Gastrocnemius medialis (tissue), 4 donors: ENCODE measurements at regions of chr13 and their contacts with region 1.

Region 1: DNA sequence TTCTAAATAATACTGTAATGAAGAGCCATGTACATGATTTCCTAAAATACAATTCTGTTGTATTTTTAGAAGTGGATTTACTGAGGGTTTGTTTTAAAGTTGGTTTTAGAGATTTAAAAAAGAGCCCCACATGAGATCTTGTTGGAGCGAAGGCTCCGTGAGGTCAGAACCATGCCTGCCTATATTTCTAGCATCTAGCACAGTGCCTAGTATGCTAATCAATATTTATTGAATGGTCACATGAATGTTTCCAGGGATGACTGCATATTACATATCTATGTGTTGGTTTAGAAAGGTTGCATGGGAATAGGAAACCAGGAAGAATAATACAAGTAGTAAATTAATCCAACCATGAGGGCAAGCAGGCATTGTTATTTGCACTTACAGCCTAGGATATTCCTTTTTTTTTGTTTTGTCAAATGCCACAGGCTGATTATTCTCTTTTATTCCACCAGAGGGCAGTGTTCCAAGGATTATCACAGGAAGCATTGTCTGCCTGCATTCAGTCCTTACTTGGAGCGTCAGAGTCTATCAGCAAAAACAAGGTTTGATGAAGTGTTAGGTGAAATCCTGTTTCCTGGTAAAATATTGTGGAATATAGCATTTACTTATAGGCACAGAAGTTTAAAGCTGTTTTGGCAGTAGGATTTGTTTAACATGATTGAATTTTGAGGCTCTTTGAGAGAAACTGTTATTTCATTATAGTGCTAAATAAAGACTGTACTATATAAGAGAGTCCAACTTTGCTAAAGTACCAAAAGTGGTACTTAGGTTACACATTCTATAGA is 46.8 kb downstream of the COG3 start:
- DNase-seq: no peak
- ATAC-seq: peak; percentile 70 to 76
- H3K4me3 ChIP-seq: no peak overlapping the region
- H3K27ac ChIP-seq: no peak overlapping the region
- H3K4me1 ChIP-seq: no peaks in the 10 kb centered on the region
- H3K27me3 ChIP-seq: no peaks in the 10 kb centered on the region
- CTCF ChIP-seq: peak; percentile 67 to 85 (median 78)
- POLR2A ChIP-seq: no peak

Region 2: GRCh38 chr13:46041419-46041839 is 529.9 kb after region 1 on chr13:
- in situ Hi-C with region 1: loop called in 1 of 4 experiments (anchors 25 kb)
- intact Hi-C with region 1: no loop called
- DNase-seq: no peak
- ATAC-seq: no peak
- H3K4me3 ChIP-seq: no peak overlapping the region
- H3K27ac ChIP-seq: no peak overlapping the region
- H3K4me1 ChIP-seq: peaks cover 0 to 15% of the 10 kb centered on the region in 2 donors
- H3K27me3 ChIP-seq: no peaks in the 10 kb centered on the region
- CTCF ChIP-seq: no peak
- POLR2A ChIP-seq: no peak

Region 3: DNA sequence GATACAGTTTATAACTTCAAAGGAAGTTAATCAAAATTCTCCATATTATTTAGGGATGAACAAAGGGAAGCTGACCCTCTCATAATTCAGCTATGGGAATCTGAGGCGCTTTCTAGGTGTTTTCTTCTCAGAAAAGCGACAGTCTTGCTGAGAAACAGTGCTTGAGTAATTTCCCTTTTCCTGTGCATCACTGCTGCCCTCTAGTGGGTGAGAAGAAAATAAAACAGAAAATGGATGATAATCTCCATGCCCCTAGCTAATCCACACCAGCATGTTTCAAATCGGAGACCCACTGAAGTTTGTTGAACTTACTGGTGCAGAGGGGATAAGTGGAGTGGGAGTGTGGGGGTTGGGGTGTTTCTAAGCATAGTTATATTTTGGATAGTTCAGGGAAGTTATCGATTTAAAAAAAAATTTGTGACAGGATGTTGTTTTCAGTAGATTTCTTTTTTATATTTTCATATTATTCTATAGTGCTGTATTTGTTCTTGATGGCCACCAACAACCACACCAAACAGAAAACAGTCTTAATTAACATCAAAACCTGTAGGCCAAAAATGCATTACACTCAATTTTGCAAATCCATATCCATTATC is 649.1 kb after region 1 on chr13:
- in situ Hi-C with region 1: loop called in 1 of 4 experiments (anchors 25 kb)
- intact Hi-C with region 1: loop called (anchors 5 kb)
- DNase-seq: no peak
- ATAC-seq: peak in 1 of 2 donors; percentile 49
- H3K4me3 ChIP-seq: no peak overlapping the region
- H3K27ac ChIP-seq: no peak overlapping the region
- H3K4me1 ChIP-seq: no peaks in the 10 kb centered on the region
- H3K27me3 ChIP-seq: no peaks in the 10 kb centered on the region
- CTCF ChIP-seq: peak; percentile 39 to 73 (median 54)
- POLR2A ChIP-seq: no peak